ENCODE measurements at regions of chr2 and their contacts with region 1.

Region 1: DNA sequence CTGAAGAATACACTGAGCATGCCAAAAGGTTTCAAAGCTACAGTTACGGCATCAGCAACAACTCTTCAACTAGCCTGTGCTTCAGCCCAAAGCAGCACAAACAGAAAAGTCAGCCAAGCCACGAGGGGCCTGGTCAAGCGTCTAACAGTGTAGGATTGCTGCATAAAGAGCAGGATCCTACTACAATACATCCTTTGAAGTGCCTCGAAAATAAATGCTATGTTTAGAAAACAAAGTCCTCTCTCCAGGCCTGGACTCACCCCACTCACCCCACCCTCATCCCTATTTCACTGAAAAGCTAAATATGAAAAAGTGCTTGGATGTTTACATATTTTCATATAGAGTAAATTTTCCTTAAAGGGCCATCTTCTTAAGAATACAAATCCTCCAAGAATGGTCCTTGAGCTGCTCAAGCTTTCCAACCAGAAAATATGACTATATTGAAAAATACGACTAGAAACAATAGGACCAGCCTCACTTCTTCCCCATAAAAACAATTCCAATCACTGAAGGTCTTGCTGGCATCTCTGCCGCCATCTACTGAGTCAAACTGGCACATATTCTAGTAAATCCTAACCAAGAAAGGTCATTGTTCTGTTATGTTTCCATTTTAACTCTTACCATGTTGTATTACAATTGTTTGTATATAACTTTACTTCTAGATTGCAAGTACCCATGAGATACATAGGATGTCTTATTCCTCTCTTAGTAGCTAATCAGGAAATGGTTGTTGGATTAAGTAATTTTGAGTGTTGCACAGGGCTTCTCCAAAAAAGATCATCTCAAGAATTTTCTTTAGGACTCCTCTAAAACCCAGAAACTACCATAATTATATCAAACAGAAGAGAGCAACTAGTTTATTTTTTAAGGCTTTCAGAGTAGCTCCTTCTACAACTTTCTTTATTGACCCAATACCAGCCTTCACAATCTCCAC is 63.6 kb downstream of the CLHC1 start:
- DNase-seq: peak; percentile 68
- H3K4me3 ChIP-seq: no peak overlapping the region
- H3K27ac ChIP-seq: peak overlapping the region; percentile 8
- H3K4me1 ChIP-seq: no peaks in the 10 kb centered on the region
- H3K27me3 ChIP-seq: no peaks in the 10 kb centered on the region
- CTCF ChIP-seq: peak; percentile 65

Region 2: DNA sequence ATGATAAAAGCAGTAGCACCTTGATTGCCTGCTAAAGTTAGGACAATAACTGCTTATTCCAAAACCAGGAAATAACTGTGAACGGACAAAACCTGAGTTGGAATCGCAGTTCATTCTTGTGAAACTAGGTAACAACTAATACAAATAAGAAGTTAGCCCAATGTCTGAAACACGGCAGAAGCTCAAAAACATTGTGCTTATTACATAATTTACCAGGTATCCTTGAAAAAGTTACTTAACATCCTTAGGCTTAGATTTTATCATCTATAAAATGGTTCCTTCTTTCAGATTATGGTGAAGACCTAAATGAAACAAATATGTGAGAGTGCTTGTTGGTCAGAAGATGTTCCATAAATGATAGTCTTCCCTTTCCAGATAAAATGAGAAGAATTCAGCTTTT is 150.6 kb before region 1 on chr2:
- intact Hi-C with region 1: loop called (anchors 2 kb)
- DNase-seq: no peak
- H3K4me3 ChIP-seq: no peak overlapping the region
- H3K27ac ChIP-seq: no peak overlapping the region
- H3K4me1 ChIP-seq: peaks cover 12% of the 10 kb centered on the region
- H3K27me3 ChIP-seq: no peaks in the 10 kb centered on the region
- CTCF ChIP-seq: no peak

Measured in colonic mucosa (tissue), 4 donors.